Naive thymus-derived CD4-positive, alpha-beta T cell (primary cell): ENCODE measurements at regions of chr20 and their contacts with region 1.

Region 1: GRCh38 chr20:36969478-36970186 is 18.1 kb upstream of the SAMHD1 start:
- DNase-seq: peak in 7 of 9 donors; percentile 47 to 66 (median 56)
- ATAC-seq: peak; percentile 77
- H3K4me3 ChIP-seq: peak overlapping the region; percentile 19
- H3K4me3 Mint-ChIP-seq: peak overlapping the region; percentile 47 to 91 (median 72)
- H3K27ac ChIP-seq: peak overlapping the region; percentile 74
- H3K27ac Mint-ChIP-seq: peak overlapping the region; percentile 89 to 100 (median 98)
- H3K4me1 ChIP-seq: peaks cover 32 to 74% of the 10 kb centered on the region in 2 donors
- H3K4me1 Mint-ChIP-seq: peaks cover 41 to 79% (median 71%) of the 10 kb centered on the region in 7 donors
- H3K27me3 ChIP-seq: no peaks in the 10 kb centered on the region
- H3K27me3 Mint-ChIP-seq: no peaks in the 10 kb centered on the region

Region 2: DNA sequence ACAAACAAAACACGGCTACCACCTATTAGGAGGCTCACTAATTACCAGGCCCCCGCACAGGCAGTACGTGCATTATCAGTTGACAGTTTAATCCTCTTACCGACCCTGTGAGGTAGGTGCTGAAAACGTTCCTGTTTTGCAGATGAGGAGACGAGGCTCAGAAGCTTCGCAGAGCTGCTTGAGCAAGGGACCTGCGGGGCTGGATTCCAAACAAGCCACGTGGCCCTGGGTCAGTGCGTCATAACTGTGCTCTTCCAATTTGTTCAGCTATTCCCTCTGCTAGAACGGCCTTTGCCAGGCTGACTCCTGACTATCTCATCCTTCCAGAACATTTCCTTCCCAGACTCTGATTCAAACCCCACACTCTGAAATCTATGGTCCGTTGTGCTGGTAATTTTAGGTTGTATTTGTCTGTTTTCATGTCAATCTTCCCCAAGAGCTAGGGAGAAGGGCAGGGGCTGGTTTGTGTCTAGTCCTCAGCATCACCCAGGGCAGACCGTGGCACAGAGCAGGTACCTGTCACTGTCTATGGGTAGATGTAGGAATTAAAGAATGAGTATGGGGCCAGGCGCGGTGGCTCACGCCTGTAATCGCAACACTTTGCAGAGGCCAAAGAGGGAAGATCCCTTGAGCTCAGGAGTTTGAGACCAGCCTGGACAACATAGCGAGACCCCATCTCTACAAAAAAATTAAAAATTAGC is 122.5 kb before region 1 on chr20:
- CTCF ChIA-PET with region 1: no interaction called
- POLR2A ChIA-PET with region 1: no interaction called
- intact Hi-C with region 1: no loop called
- DNase-seq: no peak
- ATAC-seq: no peak
- H3K4me3 ChIP-seq: no peak overlapping the region
- H3K4me3 Mint-ChIP-seq: no peak overlapping the region
- H3K27ac ChIP-seq: no peak overlapping the region
- H3K27ac Mint-ChIP-seq: no peak overlapping the region
- H3K4me1 ChIP-seq: peaks cover 0 to 12% of the 10 kb centered on the region in 2 donors
- H3K4me1 Mint-ChIP-seq: peaks cover 11 to 17% (median 12%) of the 10 kb centered on the region in 7 donors
- H3K27me3 ChIP-seq: no peaks in the 10 kb centered on the region
- H3K27me3 Mint-ChIP-seq: peaks cover 0 to 1% (median 0%) of the 10 kb centered on the region in 5 donors

Region 3: DNA sequence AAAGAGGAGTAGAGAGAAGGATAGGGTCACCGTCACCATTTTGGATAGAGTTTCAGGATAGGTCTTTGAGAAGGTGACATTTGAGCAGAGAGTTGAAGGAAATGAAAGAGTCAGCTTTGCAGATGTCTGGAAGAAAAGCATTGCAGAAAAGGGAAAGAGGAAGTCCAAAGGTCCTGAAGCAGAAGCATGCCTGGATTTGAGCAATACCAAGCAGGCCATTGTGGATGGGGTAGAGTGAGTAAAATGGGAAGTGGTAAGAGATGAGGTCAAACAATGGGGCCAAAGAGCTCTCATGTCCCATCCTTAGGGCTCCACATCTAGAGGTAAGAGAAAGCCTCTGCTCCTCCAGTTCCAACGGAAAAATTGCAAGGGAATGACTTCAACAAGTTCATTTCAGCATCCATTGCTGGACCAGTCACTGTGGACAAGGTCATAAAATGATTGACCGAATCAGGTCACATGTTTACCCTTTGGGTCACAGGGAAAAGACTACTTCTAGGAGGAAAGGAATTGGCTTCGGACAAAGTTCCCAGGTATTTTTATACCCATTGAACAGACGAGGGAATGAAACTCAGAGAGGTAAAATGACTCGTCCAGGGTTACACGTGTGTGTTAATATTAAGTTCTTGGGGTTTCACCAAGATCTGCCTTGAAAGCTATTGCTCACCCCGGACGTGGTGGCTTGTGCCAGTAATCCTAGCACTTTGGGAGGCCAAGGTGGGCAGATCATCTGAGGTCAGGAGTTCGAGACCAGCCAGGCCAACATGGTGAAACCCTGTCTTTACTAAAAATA is 11.6 kb before region 1 on chr20:
- CTCF ChIA-PET with region 1: interaction called, 11 read pairs
- POLR2A ChIA-PET with region 1: interaction called, 57 read pairs
- intact Hi-C with region 1: loop called in 1 of 2 experiments (anchors 1 kb)
- DNase-seq: no peak
- ATAC-seq: peak; percentile 86
- H3K4me3 ChIP-seq: no peak overlapping the region
- H3K4me3 Mint-ChIP-seq: no peak overlapping the region
- H3K27ac ChIP-seq: no peak overlapping the region
- H3K27ac Mint-ChIP-seq: peak overlapping the region in 5 of 9 donors; percentile 10 to 54 (median 14)
- H3K4me1 ChIP-seq: peaks cover 14 to 17% of the 10 kb centered on the region in 2 donors
- H3K4me1 Mint-ChIP-seq: peaks cover 26 to 60% (median 33%) of the 10 kb centered on the region in 7 donors
- H3K27me3 ChIP-seq: no peaks in the 10 kb centered on the region
- H3K27me3 Mint-ChIP-seq: no peaks in the 10 kb centered on the region